Activated naive CD4-positive, alpha-beta T cell treated with anti-CD3 and anti-CD28 coated beads, Interleukin-2, amount 10 ng/mL, durations not matched to agents 7 days and 5 days (primary cell): ENCODE measurements at regions of chr12 and their contacts with region 1.

Region 1: DNA sequence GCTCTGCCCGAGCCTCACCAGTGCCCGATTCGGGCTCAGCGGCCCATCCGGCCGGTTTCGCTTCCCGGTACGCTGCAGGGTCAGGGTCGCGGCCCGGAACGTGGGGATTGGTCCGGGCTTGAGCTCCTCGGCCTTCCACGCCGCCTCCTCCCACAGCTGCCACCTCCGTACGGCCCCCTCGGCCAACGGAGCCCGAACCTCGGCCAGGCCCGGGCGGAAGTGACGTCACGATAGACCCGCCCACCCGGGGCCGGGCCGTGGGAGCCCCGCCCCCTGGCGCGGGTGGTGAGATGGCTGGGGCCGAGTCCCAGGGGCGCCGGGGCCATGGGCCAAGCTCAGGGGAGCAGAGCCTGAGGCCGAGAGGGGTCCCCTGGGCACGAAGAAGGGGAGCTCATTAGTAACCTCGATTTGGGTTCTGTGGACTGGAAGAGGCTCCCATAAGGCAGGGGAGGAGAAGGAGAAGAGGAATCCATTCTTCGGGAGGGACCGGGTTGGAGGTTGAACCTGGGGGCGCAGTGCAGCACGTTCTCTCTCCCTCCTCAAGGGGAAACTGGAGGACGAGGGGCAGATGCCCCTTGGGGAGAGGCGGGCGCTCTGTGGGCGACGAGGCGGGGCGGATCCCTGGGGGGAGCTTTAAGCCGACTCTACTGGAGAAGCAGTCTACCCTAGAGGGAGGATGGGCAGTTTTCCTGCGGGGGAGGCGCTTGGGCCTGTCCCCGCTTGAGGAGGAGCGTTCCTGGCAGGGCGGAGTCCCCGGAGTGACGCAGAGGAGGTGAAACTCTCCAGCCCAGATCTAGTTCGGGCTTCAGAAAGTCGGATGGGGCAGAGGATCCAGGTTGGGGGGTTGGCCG is at the start of gene MLF2:
- DNase-seq: peak; percentile 99
- H3K4me3 Mint-ChIP-seq: peak within 1 kb of the TSS; percentile 89
- H3K27ac Mint-ChIP-seq: peak within 1 kb of the TSS; percentile 97
- H3K4me1 Mint-ChIP-seq: peaks cover 39% of the 10 kb centered on the region
- H3K27me3 Mint-ChIP-seq: peaks cover 28% of the 10 kb centered on the region

Region 2: GRCh38 chr12:6526766-6527525 is 226.2 kb before region 1 on chr12:
- CTCF ChIA-PET with region 1: no interaction called
- DNase-seq: no peak
- H3K4me3 Mint-ChIP-seq: no peak overlapping the region
- H3K27ac Mint-ChIP-seq: no peak overlapping the region
- H3K4me1 Mint-ChIP-seq: peaks cover 9% of the 10 kb centered on the region
- H3K27me3 Mint-ChIP-seq: no peaks in the 10 kb centered on the region

Region 3: DNA sequence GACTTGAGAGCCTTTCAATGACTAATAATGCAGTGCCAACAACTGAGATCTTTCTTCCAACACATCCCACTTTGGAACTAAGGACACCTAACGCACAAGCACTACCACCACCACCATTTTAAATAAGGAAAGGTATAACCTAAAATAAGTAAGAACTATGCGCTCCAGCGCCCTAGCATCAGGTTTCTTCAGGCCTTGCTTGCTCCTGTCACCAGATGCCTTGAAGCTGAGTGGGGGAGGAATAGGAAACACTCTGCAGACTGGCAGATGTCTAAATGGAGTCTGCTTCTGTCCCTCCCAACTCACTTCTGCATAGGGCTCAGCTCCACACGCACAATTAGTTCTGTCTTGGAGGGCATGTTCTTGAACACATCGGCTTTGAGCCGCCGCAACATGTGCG is 161.1 kb before region 1 on chr12:
- CTCF ChIA-PET with region 1: no interaction called
- DNase-seq: no peak
- H3K4me3 Mint-ChIP-seq: no peak overlapping the region
- H3K27ac Mint-ChIP-seq: peak overlapping the region; percentile 73
- H3K4me1 Mint-ChIP-seq: peaks cover 10% of the 10 kb centered on the region
- H3K27me3 Mint-ChIP-seq: no peaks in the 10 kb centered on the region

Region 4: GRCh38 chr12:6764011-6764828 is 11.1 kb after region 1 on chr12:
- CTCF ChIA-PET with region 1: interaction called, 44 read pairs
- DNase-seq: peak; percentile 64
- H3K4me3 Mint-ChIP-seq: peak overlapping the region; percentile 19
- H3K27ac Mint-ChIP-seq: no peak overlapping the region
- H3K4me1 Mint-ChIP-seq: peaks cover 39% of the 10 kb centered on the region
- H3K27me3 Mint-ChIP-seq: peaks cover 88% of the 10 kb centered on the region

Region 5: GRCh38 chr12:6778574-6779550 is 25.7 kb after region 1 on chr12:
- CTCF ChIA-PET with region 1: interaction called, 37 read pairs
- DNase-seq: peak; percentile 94
- H3K4me3 Mint-ChIP-seq: peak overlapping the region; percentile 75
- H3K27ac Mint-ChIP-seq: peak overlapping the region; percentile 56
- H3K4me1 Mint-ChIP-seq: peaks cover 69% of the 10 kb centered on the region
- H3K27me3 Mint-ChIP-seq: peaks cover 51% of the 10 kb centered on the region

Region 6: DNA sequence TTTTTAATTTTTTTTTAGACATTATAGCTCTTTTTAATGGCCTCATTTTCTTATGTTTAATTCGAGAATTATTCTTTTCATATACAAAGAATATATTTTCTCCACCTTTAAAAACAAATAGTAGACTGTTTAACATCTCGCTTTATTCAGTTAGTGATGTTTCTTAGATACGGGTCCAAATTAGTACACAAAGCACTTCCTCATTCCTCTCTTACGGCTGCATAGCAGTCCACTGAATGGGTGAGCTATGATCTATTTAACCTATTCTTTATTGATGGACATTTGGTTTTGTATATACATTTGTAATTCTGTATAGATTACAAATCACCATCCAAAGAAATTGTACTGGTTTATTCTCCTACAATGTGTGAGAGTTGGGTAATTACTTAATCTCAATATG is 60.2 kb after region 1 on chr12:
- CTCF ChIA-PET with region 1: interaction called, 14 read pairs
- DNase-seq: no peak
- H3K4me3 Mint-ChIP-seq: no peak overlapping the region
- H3K27ac Mint-ChIP-seq: no peak overlapping the region
- H3K4me1 Mint-ChIP-seq: peaks cover 12% of the 10 kb centered on the region
- H3K27me3 Mint-ChIP-seq: no peaks in the 10 kb centered on the region

Region 7: DNA sequence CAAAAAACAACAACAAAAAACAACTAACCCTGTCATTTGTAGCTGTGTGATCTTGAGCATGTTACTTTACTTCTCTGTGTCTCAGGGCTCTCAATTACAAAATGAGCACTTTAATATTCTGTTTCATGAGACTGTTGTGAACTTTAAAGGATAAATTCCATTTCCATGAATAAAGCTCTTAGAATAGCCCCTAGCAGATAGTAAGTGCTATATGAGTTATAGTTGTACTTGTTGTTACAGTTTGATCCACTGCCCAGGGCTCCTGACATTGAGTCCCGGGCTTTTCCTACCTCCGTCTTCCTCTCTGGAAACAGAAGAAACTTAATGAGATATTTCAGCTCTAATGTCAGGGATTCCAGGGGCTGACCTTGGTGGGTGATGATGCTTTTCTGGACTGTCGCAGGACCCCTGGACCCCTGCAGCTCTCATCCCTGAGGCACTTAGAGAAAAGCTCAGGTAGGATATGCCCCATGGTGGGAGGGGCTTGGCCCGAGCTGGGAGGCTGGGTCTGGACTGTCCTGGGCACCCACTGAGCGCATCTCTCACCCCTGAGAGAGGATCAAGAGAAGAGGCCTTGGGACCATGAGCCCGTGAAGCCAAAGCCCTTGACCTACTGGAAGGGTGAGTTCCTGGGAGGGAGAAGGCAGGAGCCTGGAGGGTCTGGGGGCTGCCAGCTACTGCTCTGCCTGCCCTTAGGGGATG is 80.2 kb after region 1 on chr12:
- CTCF ChIA-PET with region 1: interaction called, 30 read pairs
- DNase-seq: no peak
- H3K4me3 Mint-ChIP-seq: no peak overlapping the region
- H3K27ac Mint-ChIP-seq: no peak overlapping the region
- H3K4me1 Mint-ChIP-seq: peaks cover 12% of the 10 kb centered on the region
- H3K27me3 Mint-ChIP-seq: peaks cover 50% of the 10 kb centered on the region